GM13976 (cell line): ENCODE measurements at regions of chr5 and their contacts with region 1.

Region 1: DNA sequence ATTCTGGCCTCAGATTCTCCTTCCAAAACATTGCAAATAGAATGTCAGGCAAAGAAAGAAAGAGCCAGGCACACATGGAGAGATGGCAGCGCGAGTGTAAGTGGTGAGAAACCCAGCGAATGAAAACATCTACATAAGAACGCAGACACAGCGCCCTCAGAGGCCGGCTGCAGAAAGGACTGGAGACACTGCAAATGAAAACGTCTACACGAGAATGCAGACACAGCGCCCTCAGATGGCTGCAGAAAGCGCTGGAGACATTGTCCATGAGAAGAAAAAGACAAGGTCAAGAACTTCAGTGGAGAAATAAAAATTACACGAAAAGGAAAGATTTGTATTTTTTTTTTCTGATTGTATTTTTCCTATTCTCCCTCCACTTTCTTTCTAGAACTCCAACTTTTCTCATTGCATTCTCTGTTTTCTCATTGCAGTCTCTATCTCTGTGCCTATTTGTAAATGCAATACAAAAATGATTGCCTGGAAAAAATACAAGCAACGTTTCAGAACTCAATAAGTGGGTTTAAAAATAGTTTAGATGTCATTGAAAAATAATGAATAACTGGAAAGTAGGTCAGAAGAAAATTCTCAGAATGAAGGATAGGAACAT is 117.9 kb upstream of the LPCAT1 start:
- DNase-seq: peak; percentile 90
- CTCF ChIP-seq: peak; percentile 97

Region 2: GRCh38 chr5:1174122-1174936 is 467.3 kb before region 1 on chr5:
- in situ Hi-C with region 1: loop called (anchors 10 kb)
- DNase-seq: peak; percentile 71
- CTCF ChIP-seq: peak; percentile 72

Region 3: GRCh38 chr5:3251784-3252183 is 1610.1 kb after region 1 on chr5:
- in situ Hi-C with region 1: no loop called
- DNase-seq: no peak
- CTCF ChIP-seq: no peak